Left colon (tissue), 2 donors: ENCODE measurements at regions of chrX and their contacts with region 1.

Region 1: DNA sequence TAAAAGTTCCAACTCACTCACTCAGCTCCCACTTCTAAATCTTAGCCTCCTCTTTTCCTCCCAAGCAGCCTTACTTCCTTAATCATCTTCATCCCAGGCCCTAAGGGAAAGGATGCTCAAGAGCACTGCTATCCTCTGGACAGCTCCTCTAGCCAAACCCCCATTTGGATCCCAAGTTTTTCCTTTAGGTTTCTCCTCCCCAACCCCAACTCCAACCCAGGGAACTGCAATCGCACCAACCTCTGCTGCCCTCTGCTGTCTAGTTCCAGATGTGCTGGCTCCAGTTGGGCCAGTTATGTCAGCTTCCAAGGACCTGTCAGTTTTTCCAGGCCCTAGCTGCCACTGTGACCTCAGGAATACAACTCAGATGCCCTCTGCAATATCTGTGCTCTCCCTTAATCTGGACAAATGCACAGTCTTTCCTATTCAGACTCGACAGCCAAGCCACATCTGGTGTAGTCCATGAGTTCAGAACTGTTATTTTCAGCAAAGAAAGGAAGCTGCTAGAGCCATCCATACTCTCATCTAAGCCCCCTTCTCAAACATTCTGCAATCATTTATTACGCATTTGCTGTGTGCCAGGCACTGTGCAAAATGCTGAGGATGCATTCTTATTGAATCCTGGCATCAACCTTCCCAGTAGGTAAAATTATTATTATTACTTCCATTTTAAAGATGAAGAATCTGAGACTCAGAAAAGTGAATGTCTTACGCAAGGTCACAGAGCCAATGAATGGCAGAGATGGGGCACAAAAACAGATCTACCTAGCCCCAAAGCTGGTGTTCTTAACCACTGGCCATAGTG is 12.3 kb upstream of the XPNPEP2 start:
- DNase-seq: peak in 1 of 2 donors; percentile 65
- ATAC-seq: peak; percentile 81

Region 2: DNA sequence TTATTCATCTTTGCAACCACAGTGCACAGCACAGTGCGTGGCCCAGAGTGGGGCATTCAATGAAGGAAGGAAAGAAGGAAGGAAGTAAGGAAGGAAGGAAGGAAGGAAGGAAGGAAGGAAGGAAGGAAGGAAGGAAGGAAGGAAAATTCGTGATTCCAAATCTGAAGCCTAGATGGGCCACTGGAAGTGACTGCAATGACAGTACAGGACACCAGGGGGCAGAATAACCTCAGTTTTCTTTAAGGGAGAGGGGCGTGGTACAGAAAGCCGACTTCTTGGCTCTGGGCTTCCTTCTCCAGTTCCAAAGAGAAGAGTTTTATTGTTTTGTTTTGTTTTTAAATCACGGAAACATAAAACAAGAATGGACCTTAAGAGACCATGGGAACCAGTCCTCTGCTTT is 119.6 kb before region 1 on chrX:
- intact Hi-C with region 1: loop called in 1 of 2 experiments (anchors 5 kb)
- DNase-seq: peak in 1 of 2 donors; percentile 63
- ATAC-seq: peak; percentile 59

Region 3: GRCh38 chrX:129637217-129638109 is 89.0 kb before region 1 on chrX:
- intact Hi-C with region 1: loop called in 1 of 2 experiments (anchors 5 kb)
- DNase-seq: peak; percentile 40 to 68
- ATAC-seq: peak; percentile 44